ENCODE measurements at regions of chr16 and their contacts with region 1.

Region 1: DNA sequence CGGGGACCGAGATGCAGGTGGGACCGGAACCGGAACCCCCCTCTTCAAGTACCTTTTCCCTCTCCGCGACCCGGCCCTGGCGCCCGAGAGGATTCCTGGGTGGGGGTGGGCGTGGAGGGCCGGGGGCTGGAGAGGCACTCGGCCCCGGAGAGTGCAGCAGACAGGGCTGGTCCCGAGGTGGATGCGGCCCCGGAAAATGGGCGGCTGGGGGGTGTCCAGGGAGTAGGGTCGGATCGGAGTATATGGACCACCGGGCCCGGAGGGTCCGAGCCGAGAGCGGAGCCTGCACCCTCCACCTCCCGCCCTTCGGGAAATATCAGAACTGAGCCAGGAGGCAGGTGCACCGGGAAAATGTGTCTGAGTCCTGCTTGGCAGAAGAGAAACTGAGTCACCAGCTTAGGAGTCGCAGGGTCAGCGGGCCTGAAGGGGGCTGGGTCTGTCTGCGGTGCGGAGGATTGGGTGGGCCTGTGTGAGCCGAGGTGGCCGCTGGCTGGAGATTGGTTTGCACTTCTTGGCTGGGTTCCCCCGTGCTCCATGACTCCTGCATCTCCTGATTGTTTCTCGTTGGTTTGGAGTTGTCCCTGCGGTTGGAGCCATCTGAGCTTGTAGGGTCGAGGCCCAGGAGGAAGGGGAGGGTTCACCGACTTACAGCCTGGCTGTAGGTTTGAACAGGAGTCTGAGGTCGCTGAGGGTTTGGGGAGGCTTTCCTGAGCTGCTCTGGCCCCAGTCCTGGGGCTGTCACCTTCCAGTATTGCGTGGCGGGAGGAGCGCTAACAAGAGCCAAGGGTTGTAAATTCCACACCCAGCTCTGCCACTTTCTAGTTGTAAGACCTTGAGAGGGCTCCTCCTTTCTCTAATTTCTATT is 518 bp downstream of the SH2B1 start:
- DNase-seq: peak in 4 of 9 donors; percentile 24 to 43 (median 30)
- ATAC-seq: no peak
- H3K4me3 ChIP-seq: peak overlapping the region; percentile 96
- H3K4me3 Mint-ChIP-seq: peak overlapping the region; percentile 97 to 100 (median 99)
- H3K27ac ChIP-seq: peak overlapping the region; percentile 85
- H3K27ac Mint-ChIP-seq: peak overlapping the region; percentile 95 to 99 (median 97)
- H3K4me1 ChIP-seq: peaks cover 7 to 11% of the 10 kb centered on the region in 2 donors
- H3K4me1 Mint-ChIP-seq: peaks cover 15 to 42% (median 29%) of the 10 kb centered on the region in 7 donors
- H3K27me3 ChIP-seq: no peaks in the 10 kb centered on the region
- H3K27me3 Mint-ChIP-seq: no peaks in the 10 kb centered on the region

Region 2: DNA sequence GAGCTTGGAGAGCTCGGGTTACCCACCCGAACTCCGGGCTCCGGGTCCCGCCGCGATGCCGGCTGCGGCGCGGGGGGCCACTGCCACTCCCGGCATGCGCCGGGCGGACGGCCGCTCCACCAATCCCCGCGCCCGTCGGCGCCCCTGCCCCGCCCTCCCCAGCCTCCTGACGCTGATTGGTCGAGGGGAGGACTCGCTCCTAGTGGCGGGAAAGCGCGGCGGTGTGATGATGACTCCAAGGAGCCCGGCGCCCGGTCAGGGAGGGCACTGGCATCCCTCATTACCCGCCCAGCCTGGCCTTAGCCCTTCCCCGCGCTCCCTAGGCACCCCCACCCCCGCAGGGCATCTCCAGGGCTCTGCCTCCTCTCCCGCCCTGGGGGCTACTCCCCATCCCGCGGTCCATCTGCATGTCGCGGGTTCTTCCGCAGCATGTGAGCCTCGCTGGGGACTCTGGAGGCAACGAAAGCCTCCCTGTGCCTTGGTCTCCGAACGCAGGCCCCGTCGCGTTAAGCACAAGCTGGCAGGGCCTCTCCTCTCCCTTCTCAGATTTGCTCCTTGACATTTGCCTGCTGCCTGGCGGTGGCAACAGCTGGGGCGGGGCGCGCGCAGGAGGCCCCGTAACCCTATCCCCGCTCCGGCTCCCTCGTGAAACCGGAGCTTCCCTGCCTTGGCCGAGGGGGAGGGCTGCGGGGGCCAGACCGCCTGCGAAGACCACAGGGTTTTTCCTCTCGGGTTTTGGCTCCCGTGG is 15.9 kb after region 1 on chr16:
- CTCF ChIA-PET with region 1: interaction called, 3 read pairs
- POLR2A ChIA-PET with region 1: interaction called, 8 read pairs
- intact Hi-C with region 1: loop called (anchors 1 kb)
- DNase-seq: peak; percentile 64 to 89 (median 78)
- ATAC-seq: peak; percentile 99
- H3K4me3 ChIP-seq: peak overlapping the region; percentile 92
- H3K4me3 Mint-ChIP-seq: peak overlapping the region; percentile 82 to 93 (median 88)
- H3K27ac ChIP-seq: peak overlapping the region; percentile 69
- H3K27ac Mint-ChIP-seq: peak overlapping the region in 4 of 9 donors; percentile 14 to 70 (median 43)
- H3K4me1 ChIP-seq: peaks cover 0 to 16% of the 10 kb centered on the region in 2 donors
- H3K4me1 Mint-ChIP-seq: peaks cover 0 to 19% (median 15%) of the 10 kb centered on the region in 7 donors
- H3K27me3 ChIP-seq: no peaks in the 10 kb centered on the region
- H3K27me3 Mint-ChIP-seq: peaks cover 3 to 14% (median 9%) of the 10 kb centered on the region in 5 donors

Region 3: DNA sequence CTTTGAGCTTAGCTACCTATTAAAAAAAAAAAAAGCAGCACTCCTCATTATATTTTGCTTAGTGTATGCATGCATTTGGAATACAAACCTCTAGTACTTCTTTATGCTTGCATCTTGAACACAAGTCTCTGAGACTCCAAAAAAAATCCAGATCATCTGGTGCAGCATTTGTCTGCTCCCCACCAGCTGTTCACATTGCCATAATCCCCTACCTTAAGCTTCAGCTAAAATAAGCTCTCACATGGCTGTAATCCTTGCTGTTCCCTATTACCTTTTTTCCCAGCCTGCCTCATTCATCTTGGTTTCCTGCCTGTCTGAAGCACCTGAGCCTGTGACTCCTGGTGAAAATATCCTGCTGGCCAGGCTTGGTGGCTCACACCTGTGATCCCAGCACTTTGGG is 79.1 kb after region 1 on chr16:
- CTCF ChIA-PET with region 1: interaction called, 7 read pairs
- POLR2A ChIA-PET with region 1: interaction called, 4 read pairs
- intact Hi-C with region 1: loop called in 1 of 2 experiments (anchors 2 kb)
- DNase-seq: no peak
- ATAC-seq: no peak
- H3K4me3 ChIP-seq: no peak overlapping the region
- H3K4me3 Mint-ChIP-seq: no peak overlapping the region
- H3K27ac ChIP-seq: no peak overlapping the region
- H3K27ac Mint-ChIP-seq: no peak overlapping the region
- H3K4me1 ChIP-seq: peaks cover 0 to 8% of the 10 kb centered on the region in 2 donors
- H3K4me1 Mint-ChIP-seq: peaks cover 7 to 19% (median 8%) of the 10 kb centered on the region in 7 donors
- H3K27me3 ChIP-seq: no peaks in the 10 kb centered on the region
- H3K27me3 Mint-ChIP-seq: peaks cover 0 to 10% (median 0%) of the 10 kb centered on the region in 5 donors

Region 4: GRCh38 chr16:28950648-28951409 is 86.7 kb after region 1 on chr16 and contains the start of gene NFATC2IP:
- CTCF ChIA-PET with region 1: interaction called, 7 read pairs
- POLR2A ChIA-PET with region 1: interaction called, 4 read pairs
- intact Hi-C with region 1: loop called in 1 of 2 experiments (anchors 1 kb)
- DNase-seq: peak; percentile 98 to 100 (median 99)
- ATAC-seq: peak; percentile 98
- H3K4me3 ChIP-seq: peak within 1 kb of the TSS; percentile 73
- H3K4me3 Mint-ChIP-seq: peak within 1 kb of the TSS; percentile 75 to 100 (median 92)
- H3K27ac ChIP-seq: peak within 1 kb of the TSS; percentile 81
- H3K27ac Mint-ChIP-seq: peak within 1 kb of the TSS; percentile 67 to 94 (median 86)
- H3K4me1 ChIP-seq: peaks cover 10 to 14% of the 10 kb centered on the region in 2 donors
- H3K4me1 Mint-ChIP-seq: peaks cover 10 to 41% (median 37%) of the 10 kb centered on the region in 7 donors
- H3K27me3 ChIP-seq: no peaks in the 10 kb centered on the region
- H3K27me3 Mint-ChIP-seq: peaks cover 0 to 6% (median 0%) of the 10 kb centered on the region in 5 donors
- total RNA-seq, gene NFATC2IP: 70.9 to 117 (median 111) TPM

Measured in naive thymus-derived CD4-positive, alpha-beta T cell (primary cell).